Aorta (tissue), 5 donors: ENCODE measurements at regions of chr5 and their contacts with region 1.

Region 1: DNA sequence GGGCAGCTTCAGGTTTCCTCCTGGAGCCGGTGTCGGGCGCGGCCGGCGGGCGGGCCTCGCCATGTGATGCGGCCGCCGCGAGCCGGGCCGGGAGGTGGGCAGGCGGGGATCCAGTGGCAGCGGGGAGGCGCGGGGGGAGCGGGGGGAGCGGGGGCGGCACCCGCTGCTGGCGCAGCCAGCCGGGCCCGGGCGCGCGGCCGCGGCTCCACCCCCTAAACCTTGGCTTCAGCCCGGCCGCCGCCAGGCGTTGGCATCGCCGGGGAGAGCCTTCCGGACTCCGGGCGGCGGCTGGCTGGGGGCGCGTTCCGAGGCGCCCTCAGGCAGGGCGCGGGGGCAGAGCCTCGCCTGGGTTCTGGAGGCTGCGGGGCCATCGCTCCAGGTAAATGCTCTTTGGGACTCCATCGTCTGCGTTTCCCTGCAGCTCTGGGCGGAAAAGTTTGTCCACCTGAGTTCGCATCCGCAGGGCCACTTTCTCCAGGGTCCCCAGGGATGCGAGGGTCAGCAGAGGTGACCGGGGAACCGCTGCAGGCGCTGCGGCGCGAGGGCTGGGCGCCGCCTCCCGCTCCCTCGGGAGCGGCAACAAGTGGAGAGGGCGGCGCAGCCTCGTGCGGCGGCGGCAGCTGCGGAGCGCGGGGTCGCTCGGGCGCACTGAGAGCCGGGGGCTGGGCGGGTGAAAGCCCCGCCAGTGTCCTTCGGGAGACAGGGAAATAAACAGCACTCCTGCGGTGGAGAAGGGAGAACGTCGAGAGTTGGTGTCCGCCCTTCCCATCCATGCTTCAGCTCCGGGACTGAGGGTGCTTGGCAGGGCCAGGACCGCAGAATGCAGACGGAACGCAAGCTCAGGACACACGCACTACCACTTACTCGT is at the start of gene ARHGEF28:
- DNase-seq: peak; percentile 76 to 91
- ATAC-seq: peak; percentile 90
- H3K4me3 ChIP-seq: peak within 1 kb of the TSS; percentile 77 to 89
- H3K27ac ChIP-seq: peak within 1 kb of the TSS; percentile 81 to 91
- H3K4me1 ChIP-seq: peaks cover 0 to 3% of the 10 kb centered on the region in 2 donors
- H3K27me3 ChIP-seq: no peaks in the 10 kb centered on the region
- total RNA-seq, gene ARHGEF28: 18.0 to 27.8 TPM

Region 2: GRCh38 chr5:73673161-73673591 is 47.0 kb after region 1 on chr5:
- intact Hi-C with region 1: loop called in 1 of 2 experiments (anchors 5 kb)
- DNase-seq: no peak
- ATAC-seq: no peak
- H3K4me3 ChIP-seq: no peak overlapping the region
- H3K27ac ChIP-seq: peak overlapping the region; percentile 33 to 57
- H3K4me1 ChIP-seq: peaks cover 8 to 14% of the 10 kb centered on the region in 2 donors
- H3K27me3 ChIP-seq: no peaks in the 10 kb centered on the region

Region 3: DNA sequence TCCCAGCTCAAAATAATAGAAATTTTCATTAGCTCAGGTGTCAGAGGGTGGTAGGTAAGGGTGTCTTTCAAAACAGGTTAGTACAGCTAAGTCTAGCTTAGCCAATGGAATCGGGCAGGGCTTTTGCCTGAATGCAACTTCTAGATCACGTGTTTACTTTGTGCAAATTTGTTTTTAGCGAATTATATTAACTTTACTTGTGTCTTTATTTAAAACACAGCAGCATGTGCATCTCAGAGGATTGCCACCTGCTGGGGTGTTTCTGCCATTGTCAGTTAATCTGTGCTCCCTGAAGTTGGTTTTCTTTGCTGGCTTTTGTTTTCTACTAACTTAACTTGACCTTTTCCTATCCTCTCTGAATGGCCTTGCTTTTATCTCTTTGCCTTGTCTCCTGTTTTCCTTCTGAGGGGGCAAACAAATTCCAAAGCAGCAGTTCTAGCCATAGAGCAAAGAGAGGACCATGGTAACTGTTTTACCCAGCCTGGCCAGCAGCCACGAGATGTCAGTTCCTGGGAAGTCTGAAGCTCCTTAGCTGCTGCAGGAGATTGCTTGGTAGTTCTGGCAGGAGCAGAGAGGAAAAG is 67.4 kb after region 1 on chr5:
- intact Hi-C with region 1: loop called in 1 of 2 experiments (anchors 5 kb)
- DNase-seq: no peak
- ATAC-seq: no peak
- H3K4me3 ChIP-seq: no peak overlapping the region
- H3K27ac ChIP-seq: no peak overlapping the region
- H3K4me1 ChIP-seq: peaks cover 0 to 7% of the 10 kb centered on the region in 2 donors
- H3K27me3 ChIP-seq: no peaks in the 10 kb centered on the region